HepG2 (cell line): ENCODE measurements at regions of chr16 and their contacts with region 1.

Region 1: DNA sequence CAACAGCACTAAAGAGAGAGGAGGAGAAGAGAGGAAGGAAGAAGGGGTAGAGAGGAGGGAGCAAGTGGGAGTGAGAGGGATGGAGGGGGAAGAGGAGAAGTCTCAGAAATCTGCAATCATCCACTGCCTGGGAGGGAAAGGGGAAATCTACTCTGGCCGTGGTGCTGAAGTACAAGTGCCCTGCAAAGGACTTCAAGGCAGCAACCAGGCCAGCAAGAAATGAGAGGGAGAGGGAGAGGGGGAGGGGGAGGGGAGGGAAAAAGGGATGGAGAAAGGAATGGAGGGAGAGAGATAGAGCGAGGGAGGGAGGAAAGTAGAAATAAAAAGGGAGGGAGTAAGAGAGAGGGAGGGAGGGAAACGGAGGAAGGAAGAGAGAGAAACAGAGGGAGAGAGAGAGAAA is 130.8 kb upstream of the EEF2KMT start:
- DNase-seq: no peak
- ATAC-seq: no peak
- H3K4me3 ChIP-seq: no peak overlapping the region
- H3K27ac ChIP-seq: no peak overlapping the region
- H3K4me1 ChIP-seq: no peaks in the 10 kb centered on the region
- H3K27me3 ChIP-seq: peaks cover 2 to 27% of the 10 kb centered on the region in 2 experiments; a peak in 3 of 5 replicates
- CTCF ChIP-seq: no peak
- EP300 ChIP-seq: no peak
- POLR2A ChIP-seq: no peak
- RAD21 ChIP-seq: no peak

Region 2: GRCh38 chr16:5206331-5206990 is 21.9 kb before region 1 on chr16:
- CTCF ChIA-PET with region 1: no interaction called
- POLR2A ChIA-PET with region 1: no interaction called
- in situ Hi-C with region 1: no loop called
- intact Hi-C with region 1: no loop called
- DNase-seq: no peak
- ATAC-seq: no peak
- H3K4me3 ChIP-seq: no peak overlapping the region
- H3K27ac ChIP-seq: no peak overlapping the region
- H3K4me1 ChIP-seq: no peaks in the 10 kb centered on the region
- H3K27me3 ChIP-seq: no peaks in the 10 kb centered on the region
- CTCF ChIP-seq: no peak
- EP300 ChIP-seq: no peak
- POLR2A ChIP-seq: no peak
- RAD21 ChIP-seq: no peak

Region 3: DNA sequence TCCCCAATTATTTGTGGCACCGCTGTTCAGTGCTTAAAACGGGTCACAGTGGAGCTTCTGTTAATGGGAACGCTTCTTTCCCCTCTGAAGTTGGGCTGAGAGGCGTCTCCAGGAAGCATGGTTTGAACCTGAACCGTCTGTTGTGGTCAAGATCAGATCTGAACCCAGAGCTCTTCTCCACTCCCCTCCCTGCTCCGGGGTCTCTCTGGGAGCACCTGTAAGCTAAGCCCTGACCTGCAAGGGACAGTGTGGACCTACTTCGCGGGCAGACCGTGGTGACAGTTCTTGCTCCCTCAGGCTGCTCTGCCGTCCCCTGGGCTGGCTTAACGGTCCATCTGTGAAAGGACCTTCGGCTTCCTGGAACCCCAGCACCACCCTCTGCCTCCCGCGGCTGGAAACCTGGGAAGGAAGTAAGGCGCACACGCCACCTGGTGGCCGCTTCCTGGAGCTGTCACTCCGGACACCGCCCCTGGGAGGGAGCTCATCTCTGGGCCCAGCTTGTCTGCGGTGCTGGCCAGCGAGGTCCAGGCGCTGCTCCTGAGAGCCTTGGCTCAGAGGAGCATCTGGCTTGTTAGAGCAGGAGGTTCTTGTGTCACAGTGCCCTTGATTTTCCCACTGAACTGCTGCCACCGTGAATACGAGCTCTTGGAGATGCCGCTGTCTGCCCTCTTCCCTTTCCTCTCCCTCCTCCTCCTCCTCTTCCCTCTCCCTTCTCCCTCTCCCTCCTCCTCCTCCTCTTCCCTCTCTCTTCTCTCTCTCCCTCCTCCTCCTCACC is 387.7 kb after region 1 on chr16:
- CTCF ChIA-PET with region 1: no interaction called
- POLR2A ChIA-PET with region 1: no interaction called
- in situ Hi-C with region 1: loop called (anchors 25 kb)
- intact Hi-C with region 1: no loop called
- DNase-seq: peak; percentile 35
- ATAC-seq: peak; percentile 98
- H3K4me3 ChIP-seq: no peak overlapping the region; a peak in 1 of 6 replicates
- H3K27ac ChIP-seq: no peak overlapping the region
- H3K4me1 ChIP-seq: no peaks in the 10 kb centered on the region
- H3K27me3 ChIP-seq: peaks cover 1 to 9% of the 10 kb centered on the region in 2 experiments; a peak in 3 of 5 replicates
- CTCF ChIP-seq: peak; percentile 92
- EP300 ChIP-seq: no peak
- POLR2A ChIP-seq: no peak
- RAD21 ChIP-seq: peak; percentile 65